SK-N-SH (cell line): ENCODE measurements at regions of chr14 and their contacts with region 1.

Region 1: DNA sequence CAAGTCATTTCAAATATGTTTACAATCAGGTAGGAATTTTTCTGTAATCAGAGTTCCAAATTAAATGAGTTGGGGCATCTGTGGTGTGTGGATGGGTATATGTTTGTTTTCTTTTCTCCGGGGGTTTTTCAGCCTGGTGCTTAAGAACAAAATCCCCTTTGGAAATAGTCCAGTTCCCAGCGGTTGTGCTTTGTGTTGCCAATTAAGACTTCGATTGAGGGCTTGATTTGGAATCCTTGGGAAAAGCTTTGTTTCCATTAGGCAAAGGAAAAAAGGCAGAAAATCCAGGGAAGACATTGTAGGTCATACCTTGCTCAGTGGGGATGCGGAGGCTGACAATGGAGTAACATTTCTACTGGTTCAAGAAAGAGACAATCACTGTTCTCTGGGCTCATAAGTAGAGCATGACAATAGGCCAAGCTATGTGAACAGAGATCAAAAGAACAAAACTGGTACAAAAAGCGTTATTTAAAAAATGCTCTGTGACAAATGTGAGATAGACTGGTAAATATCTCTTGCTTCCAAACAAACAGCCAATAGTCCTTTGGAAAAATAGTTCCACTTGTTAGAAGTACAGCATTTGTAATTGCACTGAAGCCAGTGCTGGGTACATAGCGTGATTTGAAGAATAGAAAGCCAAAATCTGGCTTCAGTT is 79.7 kb downstream of the EML1 start:
- DNase-seq: peak; percentile 38
- H3K4me3 ChIP-seq: no peak overlapping the region
- H3K27ac ChIP-seq: peak overlapping the region in 1 of 2 experiments; percentile 58; a peak in 2 of 4 replicates
- H3K4me1 ChIP-seq: peaks cover 0 to 39% of the 10 kb centered on the region in 2 experiments; a peak in 2 of 4 replicates
- H3K27me3 ChIP-seq: no peaks in the 10 kb centered on the region
- CTCF ChIP-seq: no peak
- EP300 ChIP-seq: peak in 1 of 2 experiments; percentile 35; a peak in 1 of 4 replicates
- RAD21 ChIP-seq: no peak

Region 2: DNA sequence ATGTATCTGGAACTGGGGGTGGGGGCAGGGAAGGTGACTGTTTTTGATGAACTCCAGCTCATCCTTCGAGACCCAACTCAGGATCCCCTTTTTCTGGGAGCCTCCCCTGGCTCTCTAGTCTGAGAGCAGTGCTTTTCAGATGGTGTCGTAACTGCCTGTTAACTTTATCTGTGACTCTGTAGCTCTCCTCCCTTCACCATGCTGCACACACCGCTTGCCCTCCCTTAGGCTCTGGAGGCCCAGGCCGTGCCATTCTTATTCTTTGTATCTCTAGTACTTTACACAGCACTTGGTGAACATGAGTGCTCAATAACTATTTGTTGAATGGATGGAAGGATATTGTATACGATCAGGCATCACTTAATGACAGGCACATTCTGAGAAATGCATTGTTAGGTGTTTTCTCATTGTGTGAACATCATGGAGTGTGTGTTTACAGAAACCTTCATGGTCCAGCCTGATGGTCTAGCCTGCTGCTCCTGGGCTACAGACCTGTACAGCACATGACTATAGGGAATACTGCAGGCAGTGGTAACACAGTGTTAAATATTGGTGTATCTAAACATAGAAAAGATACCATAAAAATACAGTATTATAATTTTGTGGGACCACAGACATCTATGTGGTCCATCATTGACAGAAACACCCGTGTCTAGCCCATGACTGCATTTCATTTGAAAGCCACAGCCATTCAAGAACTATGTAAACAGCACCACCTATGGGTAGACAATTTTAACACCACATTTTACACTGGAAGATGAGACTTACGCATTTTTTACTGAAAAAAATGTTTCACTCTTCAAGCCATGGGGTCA is 12.1 kb after region 1 on chr14:
- CTCF ChIA-PET with region 1: interaction called, 45 read pairs
- POLR2A ChIA-PET with region 1: no interaction called
- DNase-seq: peak; percentile 69
- H3K4me3 ChIP-seq: no peak overlapping the region; a peak in 1 of 4 replicates
- H3K27ac ChIP-seq: no peak overlapping the region
- H3K4me1 ChIP-seq: peaks cover 4 to 5% of the 10 kb centered on the region in 2 experiments; a peak in 3 of 4 replicates
- H3K27me3 ChIP-seq: no peaks in the 10 kb centered on the region
- CTCF ChIP-seq: peak; percentile 89
- EP300 ChIP-seq: no peak
- RAD21 ChIP-seq: peak; percentile 96

Region 3: DNA sequence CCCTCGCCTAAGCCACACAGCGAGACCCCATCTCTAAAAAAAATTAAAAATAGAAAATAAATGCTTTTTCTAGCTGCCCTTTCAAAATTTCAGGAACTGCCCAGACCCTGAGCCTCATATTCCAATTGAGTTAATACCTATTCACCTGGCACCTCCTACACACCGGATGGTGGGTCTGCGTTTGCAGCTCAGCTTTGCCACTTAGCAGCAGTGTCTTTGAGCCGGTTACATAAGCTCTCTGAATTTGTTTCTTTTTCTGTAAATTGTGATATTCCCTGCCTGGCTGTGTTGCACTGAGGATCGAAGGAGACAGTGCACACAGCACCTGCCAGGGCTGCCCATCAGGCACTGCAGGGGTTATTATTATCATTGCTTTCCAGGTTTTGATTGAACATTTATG is 45.9 kb after region 1 on chr14:
- CTCF ChIA-PET with region 1: no interaction called
- POLR2A ChIA-PET with region 1: no interaction called
- DNase-seq: no peak
- H3K4me3 ChIP-seq: no peak overlapping the region
- H3K27ac ChIP-seq: no peak overlapping the region
- H3K4me1 ChIP-seq: peaks cover 0 to 4% of the 10 kb centered on the region in 2 experiments; a peak in 1 of 4 replicates
- H3K27me3 ChIP-seq: no peaks in the 10 kb centered on the region
- CTCF ChIP-seq: no peak
- EP300 ChIP-seq: no peak
- RAD21 ChIP-seq: no peak

Region 4: GRCh38 chr14:99930420-99931274 is 57.7 kb after region 1 on chr14:
- CTCF ChIA-PET with region 1: no interaction called
- POLR2A ChIA-PET with region 1: no interaction called
- DNase-seq: peak; percentile 55
- H3K4me3 ChIP-seq: no peak overlapping the region
- H3K27ac ChIP-seq: no peak overlapping the region
- H3K4me1 ChIP-seq: peaks cover 0 to 11% of the 10 kb centered on the region in 2 experiments; a peak in 2 of 4 replicates
- H3K27me3 ChIP-seq: no peaks in the 10 kb centered on the region
- CTCF ChIP-seq: no peak
- EP300 ChIP-seq: no peak
- RAD21 ChIP-seq: no peak